ENCODE measurements at regions of chr12 and their contacts with region 1.

Region 1: DNA sequence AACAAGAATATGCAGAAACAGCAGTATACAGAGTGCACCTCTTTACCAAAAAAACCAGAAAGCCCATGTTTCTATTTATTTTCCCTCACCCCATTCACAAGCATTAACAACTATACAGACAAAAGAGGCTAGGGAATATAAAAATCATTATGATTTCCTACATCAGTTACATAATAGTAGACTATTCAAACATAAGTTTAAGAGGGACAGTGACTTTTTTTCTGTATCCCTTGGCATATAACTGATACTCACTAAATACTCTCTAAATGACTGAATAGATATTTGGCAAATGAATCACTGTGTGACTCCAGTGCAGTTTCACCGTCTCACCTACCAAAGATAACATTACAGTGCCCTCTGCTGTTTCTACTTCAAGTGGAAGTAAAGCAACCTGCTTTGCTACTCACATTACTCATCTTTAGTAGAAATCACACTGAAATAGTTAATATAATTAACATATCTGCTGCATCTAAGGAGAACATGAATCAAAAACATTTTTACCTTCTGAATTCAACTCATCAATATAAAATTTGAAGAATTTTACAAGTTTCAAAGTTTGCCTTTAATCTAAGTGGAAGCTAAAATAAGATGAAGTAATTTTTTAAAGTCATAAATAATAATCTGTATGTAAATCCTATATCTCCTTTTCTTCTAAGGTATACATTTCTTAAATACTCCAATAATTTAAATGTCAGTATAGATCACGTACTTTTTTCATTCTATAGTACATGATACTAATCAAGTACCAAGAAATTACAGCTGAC is 103.8 kb downstream of the OSBPL8 start:
- DNase-seq: no peak
- ATAC-seq: peak; percentile 76 to 95
- H3K4me3 ChIP-seq: no peak overlapping the region
- H3K27ac ChIP-seq: peak overlapping the region in 2 of 4 donors; percentile 5 to 44
- H3K4me1 ChIP-seq: peaks cover 10 to 17% of the 10 kb centered on the region in 2 donors
- H3K27me3 ChIP-seq: no peaks in the 10 kb centered on the region
- CTCF ChIP-seq: peak in 4 of 5 experiments; percentile 25 to 68 (median 54)
- POLR2A ChIP-seq: no peak

Region 2: DNA sequence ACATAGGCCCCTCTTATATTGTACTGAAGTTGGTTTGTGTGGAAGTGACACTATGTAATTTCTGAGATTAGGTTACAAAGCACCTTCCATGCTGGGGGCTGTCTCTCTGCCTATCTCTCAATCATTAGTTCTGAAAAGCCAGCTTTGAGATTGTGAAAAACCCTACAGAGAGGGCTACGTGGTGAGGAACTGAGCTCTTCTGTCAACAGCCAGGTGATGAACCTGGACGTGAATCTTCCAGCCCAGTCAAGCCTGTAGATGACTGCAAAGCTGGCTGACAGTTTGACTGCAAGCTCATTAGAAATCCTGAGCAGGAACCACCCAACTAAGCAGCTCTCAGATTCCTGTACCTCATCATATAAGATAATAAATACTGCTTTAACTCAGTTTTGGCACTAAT is 71.2 kb before region 1 on chr12:
- in situ Hi-C with region 1: no loop called
- intact Hi-C with region 1: loop called (anchors 5 kb)
- DNase-seq: peak in 1 of 2 donors; percentile 22
- ATAC-seq: peak in 1 of 2 donors; percentile 53
- H3K4me3 ChIP-seq: no peak overlapping the region
- H3K27ac ChIP-seq: peak overlapping the region in 2 of 4 donors; percentile 45 to 57
- H3K4me1 ChIP-seq: peaks cover 19% of the 10 kb centered on the region in 2 donors
- H3K27me3 ChIP-seq: no peaks in the 10 kb centered on the region
- CTCF ChIP-seq: no peak
- POLR2A ChIP-seq: no peak

Region 3: DNA sequence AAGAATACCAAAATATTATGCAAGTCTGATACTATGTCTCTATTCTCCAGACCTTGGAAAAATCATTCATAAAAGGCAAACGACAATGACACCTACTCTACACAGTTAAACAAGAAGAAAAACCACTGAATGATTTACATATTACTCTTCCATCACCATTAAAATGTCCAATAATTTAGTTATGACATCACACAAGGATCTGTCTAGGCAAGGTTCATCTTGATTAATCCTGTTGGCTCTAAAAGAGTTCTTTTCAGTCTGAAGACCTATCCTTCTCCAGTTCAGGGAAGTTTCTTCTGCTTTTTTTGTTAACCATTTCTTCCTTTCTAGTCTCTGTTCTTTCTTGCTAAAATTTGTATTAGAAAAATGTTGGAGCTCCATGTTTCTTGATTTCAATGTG is 39.8 kb after region 1 on chr12:
- in situ Hi-C with region 1: no loop called
- intact Hi-C with region 1: no loop called
- DNase-seq: no peak
- ATAC-seq: no peak
- H3K4me3 ChIP-seq: no peak overlapping the region
- H3K27ac ChIP-seq: no peak overlapping the region
- H3K4me1 ChIP-seq: no peaks in the 10 kb centered on the region
- H3K27me3 ChIP-seq: no peaks in the 10 kb centered on the region
- CTCF ChIP-seq: no peak
- POLR2A ChIP-seq: no peak